ENCODE measurements at regions of chr12 and their contacts with region 1.

Region 1: DNA sequence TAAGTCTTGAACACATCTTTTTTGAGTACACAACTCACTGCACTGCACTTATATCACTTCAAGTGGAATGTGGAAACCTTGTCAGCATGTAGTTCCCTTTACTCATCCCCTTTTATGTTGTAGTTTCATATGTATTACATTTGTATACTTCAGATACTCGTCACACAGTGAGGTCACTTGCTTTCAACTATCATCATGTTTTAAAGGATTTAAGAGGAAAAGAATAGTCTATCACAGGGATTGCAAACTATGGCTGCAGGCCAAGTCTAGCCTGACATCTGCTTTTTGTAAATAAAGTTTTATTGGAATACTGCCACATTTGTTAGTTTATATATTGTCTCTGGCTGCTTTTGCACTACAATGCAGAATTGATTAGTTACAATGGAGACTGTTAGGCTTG is 24.3 kb downstream of the CNOT2 start:
- DNase-seq: no peak
- ATAC-seq: peak; percentile 91
- H3K4me3 Mint-ChIP-seq: no peak overlapping the region
- H3K27ac Mint-ChIP-seq: peak overlapping the region; percentile 89
- H3K4me1 Mint-ChIP-seq: peaks cover 84% of the 10 kb centered on the region
- H3K27me3 Mint-ChIP-seq: no peaks in the 10 kb centered on the region

Region 2: DNA sequence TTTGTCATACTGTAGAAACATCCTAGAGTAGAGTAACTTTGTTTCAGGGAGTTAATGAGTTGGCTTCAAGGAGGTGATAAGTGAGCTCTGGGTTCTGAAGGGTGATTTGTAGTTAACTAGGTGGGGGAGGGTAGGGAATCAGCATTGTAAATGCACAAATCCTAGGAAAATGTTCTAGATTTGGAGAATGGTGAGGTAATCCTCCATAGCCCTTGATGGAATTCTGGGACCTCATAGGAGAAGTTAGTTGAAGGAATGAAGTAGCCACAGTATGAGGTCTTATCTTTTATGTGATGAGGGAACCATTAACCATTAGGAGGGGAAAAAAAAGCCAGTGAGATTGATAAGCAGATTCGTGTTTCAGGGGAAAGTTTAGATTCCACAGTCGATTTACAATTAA is 16.3 kb before region 1 on chr12:
- CTCF ChIA-PET with region 1: no interaction called
- POLR2A ChIA-PET with region 1: no interaction called
- intact Hi-C with region 1: loop called in 1 of 2 experiments (anchors 2 kb)
- DNase-seq: no peak
- ATAC-seq: no peak
- H3K4me3 Mint-ChIP-seq: no peak overlapping the region
- H3K27ac Mint-ChIP-seq: no peak overlapping the region
- H3K4me1 Mint-ChIP-seq: peaks cover 84% of the 10 kb centered on the region
- H3K27me3 Mint-ChIP-seq: no peaks in the 10 kb centered on the region

Region 3: DNA sequence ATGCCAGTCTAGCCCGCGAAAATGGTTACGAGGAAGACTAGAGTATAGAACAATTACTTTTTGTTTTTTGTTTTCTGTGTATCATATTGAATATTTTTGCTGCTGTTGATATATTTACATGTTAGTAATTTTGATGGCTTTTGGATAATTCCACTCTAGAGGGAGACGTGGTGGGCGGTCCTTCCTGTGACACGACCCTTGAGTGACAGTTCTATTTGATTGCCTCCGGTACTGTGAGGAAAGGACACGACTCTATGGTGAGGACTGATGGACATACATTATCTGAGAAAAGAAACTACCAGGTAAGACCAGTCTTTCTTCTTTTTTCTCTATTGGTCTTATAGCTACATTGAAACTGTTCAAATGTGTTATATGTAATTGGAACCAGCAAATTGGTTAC is 10.4 kb after region 1 on chr12:
- CTCF ChIA-PET with region 1: interaction called, 3 read pairs
- POLR2A ChIA-PET with region 1: no interaction called
- intact Hi-C with region 1: loop called in 1 of 2 experiments (anchors 2 kb)
- DNase-seq: no peak
- ATAC-seq: no peak
- H3K4me3 Mint-ChIP-seq: no peak overlapping the region
- H3K27ac Mint-ChIP-seq: no peak overlapping the region
- H3K4me1 Mint-ChIP-seq: peaks cover 59% of the 10 kb centered on the region
- H3K27me3 Mint-ChIP-seq: no peaks in the 10 kb centered on the region

Measured in activated CD4-positive, alpha-beta T cell treated with anti-CD3 and anti-CD28 coated beads for 36 hours (primary cell).